ENCODE measurements at regions of chr5 and their contacts with region 1.

Region 1: DNA sequence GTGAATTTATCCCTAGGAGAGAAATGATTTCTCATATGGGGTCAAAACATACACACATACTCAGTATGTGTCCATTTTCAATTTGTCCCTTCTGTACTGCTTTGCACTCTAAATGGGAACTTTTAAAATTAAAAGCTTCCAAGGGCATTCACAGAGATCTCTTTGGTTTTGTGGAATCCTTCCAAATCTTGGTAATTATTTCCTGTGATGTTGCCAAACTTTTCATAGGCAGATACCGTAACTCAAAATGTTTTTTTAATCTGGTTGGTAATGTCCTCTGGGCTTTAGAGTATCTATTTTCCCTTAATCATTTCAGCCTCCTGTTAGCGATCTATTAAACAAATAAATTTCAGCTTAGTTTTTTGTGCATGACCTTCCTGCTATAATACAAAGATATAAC is 282.4 kb downstream of the ARHGEF28 start:
- DNase-seq: no peak
- H3K4me3 ChIP-seq: no peak overlapping the region
- CTCF ChIP-seq: no peak
- POLR2A ChIP-seq: no peak

Region 2: DNA sequence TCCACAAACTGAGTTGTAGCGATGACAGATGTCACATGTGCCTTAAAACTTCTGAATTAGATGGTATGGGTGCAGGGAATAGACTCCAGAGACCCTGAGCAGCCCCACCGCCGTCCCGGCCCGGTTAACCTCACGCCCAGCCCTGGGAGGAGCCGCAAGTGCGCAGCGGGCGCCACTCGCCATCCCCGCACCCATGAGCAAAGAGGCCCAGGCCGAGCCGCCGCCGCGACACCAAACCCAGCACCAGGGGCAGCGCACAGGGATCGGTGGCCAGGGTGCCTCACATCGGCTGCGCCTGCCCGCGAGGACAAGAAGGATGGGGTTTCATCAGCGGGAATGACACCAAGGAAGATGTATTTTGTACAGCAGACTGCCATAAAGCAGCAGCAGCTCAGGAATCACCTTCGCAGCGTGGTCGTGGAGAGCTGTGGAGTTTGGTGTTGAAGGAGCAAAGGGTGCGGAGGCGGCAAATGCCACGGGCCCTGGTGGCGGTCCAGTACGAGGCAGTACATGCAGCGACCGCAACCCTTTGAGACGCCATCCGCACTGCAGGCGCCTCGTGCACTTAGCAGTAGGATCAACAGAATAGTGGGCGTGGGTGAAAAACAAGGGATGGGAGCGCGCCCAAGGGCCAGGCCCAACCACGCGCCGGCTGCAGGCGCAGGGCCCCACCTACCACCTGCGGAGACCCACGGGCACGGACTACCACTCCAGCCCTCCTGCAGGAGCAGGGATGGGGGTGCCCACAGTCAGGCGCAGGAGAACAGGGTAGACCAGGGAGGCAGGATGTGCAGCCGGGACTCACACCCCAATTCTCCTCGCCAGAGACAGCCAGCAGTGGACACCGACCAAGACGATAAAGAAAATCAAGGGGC is 1490.8 kb before region 1 on chr5:
- intact Hi-C with region 1: loop called (anchors 5 kb)
- DNase-seq: no peak
- H3K4me3 ChIP-seq: no peak overlapping the region
- CTCF ChIP-seq: no peak
- POLR2A ChIP-seq: no peak